ENCODE measurements at regions of chr16 and their contacts with region 1.

Region 1: DNA sequence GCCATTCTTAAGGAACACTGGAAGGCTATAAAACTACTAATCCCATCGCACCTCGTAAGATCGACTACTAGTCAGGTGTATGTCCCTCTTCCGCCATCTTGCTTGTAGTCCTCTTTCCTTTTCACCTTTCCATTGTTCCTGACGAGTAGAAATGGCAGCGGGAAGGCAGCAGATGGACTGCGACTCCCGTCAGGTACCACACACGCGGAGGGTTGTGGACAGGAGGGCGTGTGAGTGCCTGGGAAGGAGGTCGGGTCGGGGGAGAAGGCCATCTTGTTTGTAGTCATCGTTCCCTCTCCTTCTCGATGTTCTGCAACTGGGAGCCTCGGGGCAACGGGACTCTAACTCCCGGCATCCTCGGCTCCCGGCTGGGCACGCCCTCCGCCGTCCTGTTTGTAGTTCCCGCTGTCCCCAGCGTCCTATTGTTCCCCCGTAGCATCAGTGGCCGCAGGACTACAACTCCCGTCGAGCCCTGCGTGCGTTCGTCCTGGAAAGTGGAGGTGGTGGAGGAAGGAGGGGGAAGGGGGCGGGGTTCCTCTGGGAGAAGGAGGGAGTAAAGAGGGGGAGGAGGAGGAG is 324 bp upstream of the FBXL19 start:
- DNase-seq: peak; percentile 98 to 100
- H3K4me3 ChIP-seq: peak overlapping the region; percentile 83
- H3K27ac ChIP-seq: peak overlapping the region; percentile 90
- H3K4me1 ChIP-seq: no peaks in the 10 kb centered on the region; the same call in 1 of the 2 replicates
- H3K27me3 ChIP-seq: no peaks in the 10 kb centered on the region
- CTCF ChIP-seq: no peak

Region 2: GRCh38 chr16:30740364-30741251 is 182.4 kb before region 1 on chr16:
- CTCF ChIA-PET with region 1: no interaction called
- POLR2A ChIA-PET with region 1: no interaction called
- intact Hi-C with region 1: loop called (anchors 1 kb)
- DNase-seq: peak; percentile 98
- H3K4me3 ChIP-seq: peak overlapping the region; percentile 68
- H3K27ac ChIP-seq: peak overlapping the region; percentile 96
- H3K4me1 ChIP-seq: peaks cover 33% of the 10 kb centered on the region
- H3K27me3 ChIP-seq: no peaks in the 10 kb centered on the region
- CTCF ChIP-seq: 0 out of 2 replicates have a peak, but pooled peaks have one; percentile 17

Region 3: GRCh38 chr16:30844671-30845449 is 78.2 kb before region 1 on chr16:
- CTCF ChIA-PET with region 1: interaction called, 9 read pairs
- POLR2A ChIA-PET with region 1: interaction called, 6 read pairs
- intact Hi-C with region 1: loop called (anchors 1 kb)
- DNase-seq: peak; percentile 72 to 81
- H3K4me3 ChIP-seq: no peak overlapping the region
- H3K27ac ChIP-seq: no peak overlapping the region
- H3K4me1 ChIP-seq: 0 out of 2 replicates have a peak, but pooled peaks cover 4% of the 10 kb centered on the region
- H3K27me3 ChIP-seq: no peaks in the 10 kb centered on the region
- CTCF ChIP-seq: peak; percentile 97

Region 4: GRCh38 chr16:30902029-30902972 is 20.7 kb before region 1 on chr16:
- CTCF ChIA-PET with region 1: no interaction called
- POLR2A ChIA-PET with region 1: no interaction called
- intact Hi-C with region 1: loop called (anchors 2 kb)
- DNase-seq: peak in 1 of 2 experiments; percentile 82
- H3K4me3 ChIP-seq: peak overlapping the region; percentile 73
- H3K27ac ChIP-seq: no peak overlapping the region
- H3K4me1 ChIP-seq: peaks cover 16% of the 10 kb centered on the region; the same call in 1 of the 2 replicates
- H3K27me3 ChIP-seq: no peaks in the 10 kb centered on the region
- CTCF ChIP-seq: 0 out of 2 replicates have a peak, but pooled peaks have one; percentile 25

Region 5: DNA sequence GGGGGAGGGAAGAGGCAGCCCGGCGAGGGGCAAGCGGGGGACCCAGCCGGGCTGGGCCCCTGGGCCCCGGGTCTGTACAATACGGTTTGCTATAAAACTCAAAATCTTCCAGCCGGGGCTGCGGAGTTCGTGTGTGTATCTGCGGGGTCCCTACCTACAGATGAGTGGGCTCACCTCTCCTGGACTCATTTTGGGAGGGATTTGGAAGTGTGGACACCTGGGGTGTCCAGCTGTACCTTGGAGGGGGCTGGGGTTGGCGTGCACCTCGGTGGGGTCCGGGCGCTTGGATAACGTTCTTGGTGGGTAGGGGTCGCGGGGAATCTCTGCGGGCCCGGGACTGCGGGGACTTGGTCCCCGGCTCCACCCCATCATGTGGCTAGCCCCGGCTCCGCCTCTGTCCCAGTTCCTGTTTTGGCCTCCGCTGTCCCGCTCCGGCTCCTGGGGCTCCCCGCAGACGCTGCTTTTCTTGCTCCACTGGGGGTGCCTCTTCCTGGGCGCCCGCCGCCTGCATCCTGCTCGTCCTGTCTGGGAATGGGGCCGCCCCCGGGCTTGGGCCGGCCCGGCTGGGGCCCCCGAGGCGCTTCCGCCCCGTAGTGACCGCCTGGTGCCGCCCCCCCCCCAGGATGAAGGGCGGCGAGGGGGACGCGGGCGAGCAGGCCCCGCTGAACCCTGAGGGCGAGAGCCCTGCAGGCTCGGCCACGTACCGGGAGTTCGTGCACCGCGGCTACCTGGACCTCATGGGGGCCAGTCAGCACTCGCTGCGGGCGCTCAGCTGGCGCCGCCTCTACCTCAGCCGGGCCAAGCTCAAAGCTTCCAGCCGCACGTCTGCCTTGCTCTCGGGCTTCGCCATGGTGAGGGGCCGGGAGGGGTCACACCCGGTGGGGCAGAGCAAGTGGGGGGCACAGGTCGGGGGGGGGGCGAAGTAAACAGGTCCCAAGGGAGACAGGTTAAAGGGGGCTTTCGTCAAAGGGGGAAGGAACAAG is 25.9 kb after region 1 on chr16 and contains the start of gene ORAI3:
- CTCF ChIA-PET with region 1: interaction called, 3 read pairs
- POLR2A ChIA-PET with region 1: interaction called, 14 read pairs
- intact Hi-C with region 1: loop called (anchors 1 kb)
- DNase-seq: peak; percentile 53 to 73
- H3K4me3 ChIP-seq: peak within 1 kb of the TSS; percentile 90
- H3K27ac ChIP-seq: no peak within 1 kb of the TSS
- H3K4me1 ChIP-seq: peaks cover 15% of the 10 kb centered on the region
- H3K27me3 ChIP-seq: no peaks in the 10 kb centered on the region
- CTCF ChIP-seq: no peak
- total RNA-seq, gene ORAI3: 40.7 and 43.5 TPM in 2 replicates

Region 6: GRCh38 chr16:31105677-31106213 is 182.7 kb after region 1 on chr16:
- CTCF ChIA-PET with region 1: no interaction called
- POLR2A ChIA-PET with region 1: no interaction called
- intact Hi-C with region 1: no loop called
- DNase-seq: peak; percentile 47 to 93
- H3K4me3 ChIP-seq: peak overlapping the region; percentile 38; the same call in 1 of the 2 replicates
- H3K27ac ChIP-seq: no peak overlapping the region
- H3K4me1 ChIP-seq: peaks cover 15% of the 10 kb centered on the region
- H3K27me3 ChIP-seq: no peaks in the 10 kb centered on the region
- CTCF ChIP-seq: peak; percentile 87